Prostate gland (tissue), 2 donors: ENCODE measurements at regions of chr5 and their contacts with region 1.

Region 1: GRCh38 chr5:5492087-5492933 is 69.8 kb downstream of the ICE1 start:
- DNase-seq: no peak
- H3K4me3 ChIP-seq: no peak overlapping the region
- H3K27ac ChIP-seq: no peak overlapping the region
- H3K4me1 ChIP-seq: no peaks in the 10 kb centered on the region
- H3K27me3 ChIP-seq: no peaks in the 10 kb centered on the region
- CTCF ChIP-seq: peak in 3 of 4 experiments; percentile 43 to 66 (median 50)
- POLR2A ChIP-seq: no peak

Region 2: DNA sequence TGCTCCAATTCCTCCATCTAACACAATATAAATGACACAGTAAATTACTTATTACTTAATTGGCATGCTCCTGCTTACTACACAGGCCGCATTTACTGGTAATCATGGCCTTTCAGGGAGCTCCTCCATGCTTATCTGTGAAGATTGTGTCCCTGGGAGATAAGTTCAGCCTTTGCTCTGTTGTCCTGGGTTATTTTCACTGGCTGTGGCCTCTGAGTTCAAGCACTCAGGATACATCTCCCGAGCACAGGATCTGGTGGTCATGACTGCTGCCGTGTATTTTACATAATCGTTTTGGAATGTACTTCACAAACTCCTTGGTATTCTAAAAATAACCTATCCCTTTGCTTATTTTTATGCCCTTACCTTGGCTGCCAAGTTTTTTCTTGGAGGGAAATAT is 145.9 kb after region 1 on chr5:
- intact Hi-C with region 1: no loop called
- DNase-seq: no peak
- H3K4me3 ChIP-seq: no peak overlapping the region
- H3K27ac ChIP-seq: no peak overlapping the region
- H3K4me1 ChIP-seq: no peaks in the 10 kb centered on the region
- H3K27me3 ChIP-seq: no peaks in the 10 kb centered on the region
- CTCF ChIP-seq: no peak
- POLR2A ChIP-seq: no peak

Region 3: GRCh38 chr5:5886812-5887486 is 394.6 kb after region 1 on chr5:
- intact Hi-C with region 1: loop called (anchors 10 kb)
- DNase-seq: peak; percentile 9
- H3K4me3 ChIP-seq: no peak overlapping the region
- H3K27ac ChIP-seq: no peak overlapping the region
- H3K4me1 ChIP-seq: no peaks in the 10 kb centered on the region
- H3K27me3 ChIP-seq: no peaks in the 10 kb centered on the region
- CTCF ChIP-seq: peak; percentile 49 to 66 (median 59)
- POLR2A ChIP-seq: no peak

Region 4: DNA sequence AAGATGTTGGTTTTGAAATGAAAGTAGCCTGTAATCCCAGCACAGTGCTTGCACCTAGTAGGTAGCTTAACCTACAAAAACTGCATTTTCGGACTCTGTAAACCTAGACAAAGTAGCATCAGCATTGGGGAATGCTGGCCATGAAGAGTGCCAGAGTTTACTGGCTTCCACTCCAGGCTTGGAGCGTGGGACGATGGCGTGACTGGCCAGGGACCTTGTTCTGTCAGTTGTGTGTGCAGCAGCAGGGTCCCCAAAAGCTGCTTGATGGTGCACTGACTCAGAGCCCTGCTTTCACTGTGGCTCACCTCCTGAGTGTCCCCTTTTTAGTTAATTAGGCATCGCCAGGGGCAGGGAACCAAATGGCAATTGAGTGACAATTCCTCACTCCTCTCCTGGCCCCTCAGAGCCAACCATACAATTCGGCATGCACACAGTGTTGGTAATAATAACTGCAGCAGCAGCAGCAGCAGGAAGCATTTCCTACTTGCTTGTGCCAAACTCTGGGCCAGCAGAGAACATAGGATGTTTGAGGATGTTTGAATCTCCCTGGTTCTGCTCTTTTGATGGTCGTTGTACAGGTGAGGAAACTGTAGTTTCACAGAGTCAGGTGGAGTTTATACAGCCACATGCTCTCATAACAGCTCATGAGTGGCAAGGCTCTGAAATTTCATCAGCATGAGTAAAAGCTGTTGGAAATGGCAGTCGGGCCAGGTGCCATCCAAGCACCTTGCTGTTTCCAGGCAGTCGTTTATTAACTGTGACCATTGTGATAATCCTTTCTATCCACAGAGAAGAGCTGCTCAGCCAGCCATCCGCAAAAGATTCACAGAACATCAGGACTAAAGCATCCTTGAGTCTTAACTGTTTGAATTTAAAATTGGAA is 960.6 kb after region 1 on chr5:
- intact Hi-C with region 1: loop called (anchors 10 kb)
- DNase-seq: no peak
- H3K4me3 ChIP-seq: no peak overlapping the region
- H3K27ac ChIP-seq: no peak overlapping the region
- H3K4me1 ChIP-seq: no peaks in the 10 kb centered on the region
- H3K27me3 ChIP-seq: no peaks in the 10 kb centered on the region
- CTCF ChIP-seq: no peak
- POLR2A ChIP-seq: no peak

Region 5: GRCh38 chr5:6576861-6577501 is 1084.7 kb after region 1 on chr5:
- intact Hi-C with region 1: loop called (anchors 5 kb)
- DNase-seq: peak; percentile 45
- H3K4me3 ChIP-seq: no peak overlapping the region
- H3K27ac ChIP-seq: no peak overlapping the region
- H3K4me1 ChIP-seq: no peaks in the 10 kb centered on the region
- H3K27me3 ChIP-seq: no peaks in the 10 kb centered on the region
- CTCF ChIP-seq: peak in 3 of 4 experiments; percentile 57 to 61 (median 60)
- POLR2A ChIP-seq: no peak

Region 6: DNA sequence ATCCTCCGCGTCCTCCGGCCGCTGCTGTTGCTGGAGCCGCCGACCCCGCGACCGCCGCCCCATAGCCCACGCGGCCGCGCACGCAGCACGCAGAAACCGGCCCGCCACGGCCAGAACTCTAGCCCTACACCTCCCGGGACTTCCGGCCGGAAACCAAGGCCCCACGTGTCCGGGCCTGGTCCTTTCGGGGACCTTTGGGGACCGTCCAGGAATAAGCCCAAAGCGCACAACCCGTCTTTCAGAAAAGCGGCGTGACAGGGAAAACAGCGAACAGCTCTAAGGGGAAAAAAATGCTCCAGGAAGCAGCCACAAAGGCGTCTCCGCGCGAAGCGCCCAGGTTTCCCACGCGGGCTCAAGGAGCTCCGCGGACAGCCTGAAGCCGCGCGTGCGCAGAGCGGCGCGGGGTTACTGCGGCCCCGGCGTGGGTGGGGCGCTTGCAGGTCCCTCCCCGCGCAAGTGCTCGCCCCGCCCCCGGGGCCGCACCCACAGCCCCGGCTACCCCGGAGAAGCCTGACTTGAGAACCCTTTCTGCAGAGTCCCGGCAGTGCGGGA is 1140.7 kb after region 1 on chr5 and contains the starts of genes NSUN2 and SRD5A1:
- intact Hi-C with region 1: loop called (anchors 5 kb)
- DNase-seq: peak; percentile 89
- H3K4me3 ChIP-seq: peak within 1 kb of the TSS; percentile 68 to 84
- H3K27ac ChIP-seq: peak within 1 kb of the TSS; percentile 88 to 93
- H3K4me1 ChIP-seq: peaks cover 7% of the 10 kb centered on the region
- H3K27me3 ChIP-seq: no peaks in the 10 kb centered on the region
- CTCF ChIP-seq: no peak
- POLR2A ChIP-seq: no peak
- total RNA-seq, gene NSUN2: 40.8 to 54.5 TPM
- total RNA-seq, gene SRD5A1: 9.4 to 29.3 TPM

Region 7: GRCh38 chr5:6712577-6713275 is 1220.4 kb after region 1 on chr5:
- intact Hi-C with region 1: loop called (anchors 10 kb)
- DNase-seq: peak; percentile 96
- H3K4me3 ChIP-seq: peak overlapping the region; percentile 61 to 67
- H3K27ac ChIP-seq: peak overlapping the region; percentile 92 to 93
- H3K4me1 ChIP-seq: peaks cover 12% of the 10 kb centered on the region
- H3K27me3 ChIP-seq: no peaks in the 10 kb centered on the region
- CTCF ChIP-seq: peak in 1 of 4 experiments; percentile 40
- POLR2A ChIP-seq: peak; percentile 62

Region 8: GRCh38 chr5:6745706-6746222 is 1253.5 kb after region 1 on chr5:
- intact Hi-C with region 1: loop called (anchors 10 kb)
- DNase-seq: peak; percentile 37
- H3K4me3 ChIP-seq: no peak overlapping the region
- H3K27ac ChIP-seq: no peak overlapping the region
- H3K4me1 ChIP-seq: no peaks in the 10 kb centered on the region
- H3K27me3 ChIP-seq: no peaks in the 10 kb centered on the region
- CTCF ChIP-seq: peak in 3 of 4 experiments; percentile 61 to 88 (median 80)
- POLR2A ChIP-seq: no peak